PC-9 (cell line): ENCODE measurements at regions of chr12 and their contacts with region 1.

Region 1: DNA sequence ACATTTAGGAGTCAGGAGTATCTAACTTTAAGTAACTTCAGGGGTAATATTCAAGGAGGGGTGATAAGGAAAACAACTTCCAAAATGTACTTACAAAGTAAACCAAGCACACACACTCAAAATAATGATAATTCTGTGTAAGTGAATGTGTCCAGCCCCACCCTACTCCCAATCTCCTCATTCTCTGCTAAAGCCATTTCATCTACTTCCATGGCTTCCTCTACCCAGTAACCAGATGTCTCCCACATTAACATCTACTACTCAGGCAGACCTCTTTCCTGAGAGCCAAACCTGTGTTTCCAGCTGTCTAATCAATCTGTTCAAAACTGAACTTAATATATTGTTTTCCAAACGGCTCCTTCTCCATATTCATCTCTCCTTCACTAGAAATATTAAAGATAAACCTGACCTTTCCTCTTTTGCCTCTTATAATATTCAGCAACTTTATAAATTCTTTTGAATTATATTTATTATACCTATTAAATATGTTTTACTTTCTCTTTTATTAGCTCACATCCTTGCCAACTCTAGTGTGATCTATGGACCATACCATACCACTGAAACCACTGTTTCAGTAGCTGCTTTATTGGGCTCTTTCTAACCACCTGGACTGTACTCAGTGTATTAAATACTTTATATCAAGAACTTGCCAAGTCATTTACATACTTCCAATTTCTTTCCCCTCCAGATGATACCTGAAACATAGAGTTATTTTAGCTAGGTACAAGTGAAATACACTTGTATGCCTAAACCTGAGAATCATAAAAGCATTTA is 170.7 kb downstream of the PPFIA2 start:
- DNase-seq: no peak
- H3K4me3 ChIP-seq: no peak overlapping the region
- H3K27ac ChIP-seq: no peak overlapping the region
- H3K4me1 ChIP-seq: no peaks in the 10 kb centered on the region
- H3K27me3 ChIP-seq: no peaks in the 10 kb centered on the region
- CTCF ChIP-seq: no peak

Region 2: DNA sequence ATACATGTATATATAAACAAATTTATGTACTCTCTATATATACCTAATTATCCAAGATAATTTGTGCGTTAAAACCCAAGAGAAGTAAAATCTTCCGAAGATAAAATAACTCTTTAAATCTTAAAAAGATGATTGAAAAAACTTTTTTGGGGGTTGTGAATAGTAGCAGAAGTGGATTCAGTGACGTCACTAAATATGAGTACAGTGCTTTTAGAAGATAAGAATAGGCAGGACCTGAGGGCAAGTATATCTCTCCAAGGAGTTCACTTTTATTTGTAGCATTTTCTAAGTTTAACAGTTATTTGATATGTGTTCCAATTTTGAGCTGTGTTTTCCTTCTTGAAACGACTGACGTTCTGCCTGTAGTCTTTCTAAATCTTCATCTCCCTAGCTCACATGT is 149.1 kb before region 1 on chr12:
- CTCF ChIA-PET with region 1: no interaction called
- POLR2A ChIA-PET with region 1: no interaction called
- intact Hi-C with region 1: loop called (anchors 10 kb)
- DNase-seq: no peak
- H3K4me3 ChIP-seq: no peak overlapping the region
- H3K27ac ChIP-seq: no peak overlapping the region
- H3K4me1 ChIP-seq: no peaks in the 10 kb centered on the region
- H3K27me3 ChIP-seq: no peaks in the 10 kb centered on the region
- CTCF ChIP-seq: no peak

Region 3: GRCh38 chr12:82375201-82375600 is 786.8 kb after region 1 on chr12:
- CTCF ChIA-PET with region 1: no interaction called
- POLR2A ChIA-PET with region 1: no interaction called
- intact Hi-C with region 1: no loop called
- DNase-seq: no peak
- H3K4me3 ChIP-seq: no peak overlapping the region
- H3K27ac ChIP-seq: no peak overlapping the region
- H3K4me1 ChIP-seq: no peaks in the 10 kb centered on the region
- H3K27me3 ChIP-seq: no peaks in the 10 kb centered on the region
- CTCF ChIP-seq: no peak